BJ (cell line): ENCODE measurements at regions of chr3 and their contacts with region 1.

Region 1: GRCh38 chr3:40179016-40179415 is 130.5 kb upstream of the EIF1B start:
- DNase-seq: peak; percentile 4
- H3K4me3 ChIP-seq: no peak overlapping the region
- H3K27me3 ChIP-seq: no peaks in the 10 kb centered on the region
- CTCF ChIP-seq: peak; percentile 77

Region 2: DNA sequence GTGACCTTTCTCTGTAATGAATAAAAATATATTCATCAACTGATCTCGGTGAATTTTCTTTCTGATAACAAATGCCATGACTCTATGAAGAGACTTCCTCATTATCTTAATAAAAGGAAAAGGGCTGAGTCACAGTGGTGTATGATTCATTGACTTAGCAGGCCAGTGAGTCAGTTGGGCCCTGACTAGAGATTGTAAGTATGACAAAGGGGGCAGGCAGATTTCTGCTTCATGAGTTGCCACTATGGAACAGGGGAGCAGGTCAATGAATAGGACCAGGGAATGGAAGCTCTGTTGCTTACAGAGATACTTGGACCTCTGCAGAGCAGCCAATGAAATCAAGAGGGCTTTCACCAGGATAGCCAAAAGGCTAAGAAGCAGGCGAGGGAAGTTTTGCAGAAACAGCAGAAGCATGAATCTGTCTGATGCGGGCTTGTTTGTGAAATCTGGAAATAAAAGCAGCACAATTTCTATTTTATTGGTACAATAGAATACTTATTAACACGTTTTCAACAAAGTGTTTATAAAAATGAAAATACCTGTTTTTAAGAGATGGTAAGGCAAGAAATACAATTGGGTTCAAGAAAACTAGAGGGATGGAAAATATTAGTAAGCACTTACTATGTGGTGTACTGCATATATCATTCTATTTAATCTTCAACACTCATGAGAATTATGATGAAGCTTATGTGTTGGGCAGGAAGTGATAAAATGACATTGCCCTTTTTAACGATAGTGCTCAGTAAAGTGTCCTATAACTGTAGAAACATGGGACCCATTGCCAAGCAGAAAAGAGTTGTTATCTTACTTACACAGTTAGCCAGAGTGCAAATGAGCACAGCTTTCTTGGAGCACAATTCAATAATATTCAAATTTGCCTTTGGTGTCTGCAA is 539.4 kb before region 1 on chr3:
- CTCF ChIA-PET with region 1: interaction called, 19 read pairs
- POLR2A ChIA-PET with region 1: no interaction called
- DNase-seq: peak; percentile 82
- H3K4me3 ChIP-seq: no peak overlapping the region
- H3K27me3 ChIP-seq: no peaks in the 10 kb centered on the region; the same call in 1 of the 2 replicates
- CTCF ChIP-seq: no peak

Region 3: DNA sequence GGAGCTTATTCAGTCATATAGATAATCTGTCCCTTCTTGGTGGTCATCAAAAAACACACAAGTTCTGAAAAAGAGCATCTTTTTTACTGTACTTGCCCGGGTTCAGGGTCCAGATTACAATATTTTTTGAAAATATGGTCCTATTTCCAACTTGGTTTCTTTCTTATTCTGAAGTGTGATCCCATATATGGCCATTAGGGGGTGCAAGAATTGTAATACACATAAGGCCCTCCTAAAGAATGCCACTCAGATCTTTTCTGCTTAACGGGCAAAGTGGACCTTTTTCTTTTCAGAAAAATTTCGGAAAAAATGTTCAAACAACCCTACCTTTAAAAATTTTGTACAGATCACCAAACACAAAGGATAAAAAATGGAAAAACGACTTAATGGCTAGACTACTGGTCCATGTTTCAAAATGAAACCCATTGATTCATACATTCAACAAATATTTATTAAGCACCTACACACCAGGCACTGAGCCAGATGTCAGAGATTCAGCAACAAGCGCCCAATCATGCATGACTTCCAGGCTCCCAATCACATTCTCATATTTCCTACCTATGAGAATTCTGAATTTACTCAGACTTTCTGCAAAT is 471.6 kb before region 1 on chr3:
- CTCF ChIA-PET with region 1: interaction called, 20 read pairs
- POLR2A ChIA-PET with region 1: no interaction called
- DNase-seq: no peak
- H3K4me3 ChIP-seq: no peak overlapping the region
- H3K27me3 ChIP-seq: no peaks in the 10 kb centered on the region
- CTCF ChIP-seq: peak; percentile 71

Region 4: DNA sequence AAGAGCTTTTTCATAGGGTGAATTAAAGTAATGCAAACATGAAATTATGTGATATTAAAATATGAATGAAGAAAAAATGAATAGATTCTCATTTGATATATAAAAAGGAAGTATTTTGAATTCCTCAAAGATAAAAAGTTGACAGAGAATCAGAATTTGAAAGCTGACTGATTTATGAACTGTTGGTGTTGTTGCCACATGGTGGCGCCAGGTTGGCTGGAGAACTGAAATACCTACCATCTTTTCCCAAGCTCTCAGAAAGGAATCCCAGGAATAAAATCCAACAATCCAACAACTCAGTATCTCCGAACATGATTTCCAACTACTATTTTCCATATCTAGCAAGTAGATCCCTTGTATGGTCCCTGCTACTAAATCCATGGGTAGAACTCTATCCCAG is 366.5 kb before region 1 on chr3:
- CTCF ChIA-PET with region 1: interaction called, 19 read pairs
- POLR2A ChIA-PET with region 1: no interaction called
- DNase-seq: no peak
- H3K4me3 ChIP-seq: no peak overlapping the region
- H3K27me3 ChIP-seq: peaks cover 25% of the 10 kb centered on the region
- CTCF ChIP-seq: no peak

Region 5: GRCh38 chr3:40216471-40216870 is 37.5 kb after region 1 on chr3:
- CTCF ChIA-PET with region 1: no interaction called
- POLR2A ChIA-PET with region 1: no interaction called
- DNase-seq: no peak
- H3K4me3 ChIP-seq: no peak overlapping the region
- H3K27me3 ChIP-seq: no peaks in the 10 kb centered on the region
- CTCF ChIP-seq: no peak

Region 6: GRCh38 chr3:40258555-40258954 is 79.5 kb after region 1 on chr3:
- CTCF ChIA-PET with region 1: no interaction called
- POLR2A ChIA-PET with region 1: no interaction called
- DNase-seq: peak; percentile 2
- H3K4me3 ChIP-seq: no peak overlapping the region
- H3K27me3 ChIP-seq: 0 out of 2 replicates have a peak, but pooled peaks cover 2% of the 10 kb centered on the region
- CTCF ChIP-seq: no peak

Region 7: DNA sequence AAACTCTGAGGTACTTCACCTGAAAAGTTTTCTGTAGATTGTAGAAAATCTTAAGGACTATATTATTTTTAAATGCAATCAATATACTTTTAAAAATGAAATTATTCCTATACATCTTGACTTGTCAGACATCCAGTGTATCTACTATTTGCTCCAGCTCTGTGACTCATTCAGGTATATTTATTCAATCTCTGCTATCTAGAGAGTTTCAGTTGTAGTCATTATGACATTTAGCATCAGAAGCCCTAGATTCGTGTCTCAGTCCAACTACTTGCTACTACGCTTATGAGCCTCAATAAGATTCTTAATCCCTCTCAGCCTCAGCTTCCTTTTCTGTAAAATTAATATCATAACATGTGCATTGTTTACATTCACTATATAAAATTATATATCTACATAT is 108.2 kb after region 1 on chr3:
- CTCF ChIA-PET with region 1: no interaction called
- POLR2A ChIA-PET with region 1: no interaction called
- DNase-seq: no peak
- H3K4me3 ChIP-seq: no peak overlapping the region
- H3K27me3 ChIP-seq: no peaks in the 10 kb centered on the region
- CTCF ChIP-seq: no peak